Activated CD8-positive, alpha-beta T cell treated with anti-CD3 and anti-CD28 coated beads for 36 hours (primary cell): ENCODE measurements at regions of chr2 and their contacts with region 1.

Region 1: GRCh38 chr2:6826081-6826913 is 39.4 kb downstream of the CMPK2 start:
- DNase-seq: peak; percentile 82
- ATAC-seq: peak; percentile 96
- H3K4me3 Mint-ChIP-seq: no peak overlapping the region
- H3K27ac Mint-ChIP-seq: no peak overlapping the region
- H3K4me1 Mint-ChIP-seq: peaks cover 9% of the 10 kb centered on the region
- H3K27me3 Mint-ChIP-seq: no peaks in the 10 kb centered on the region
- CTCF ChIP-seq: peak; percentile 85

Region 2: DNA sequence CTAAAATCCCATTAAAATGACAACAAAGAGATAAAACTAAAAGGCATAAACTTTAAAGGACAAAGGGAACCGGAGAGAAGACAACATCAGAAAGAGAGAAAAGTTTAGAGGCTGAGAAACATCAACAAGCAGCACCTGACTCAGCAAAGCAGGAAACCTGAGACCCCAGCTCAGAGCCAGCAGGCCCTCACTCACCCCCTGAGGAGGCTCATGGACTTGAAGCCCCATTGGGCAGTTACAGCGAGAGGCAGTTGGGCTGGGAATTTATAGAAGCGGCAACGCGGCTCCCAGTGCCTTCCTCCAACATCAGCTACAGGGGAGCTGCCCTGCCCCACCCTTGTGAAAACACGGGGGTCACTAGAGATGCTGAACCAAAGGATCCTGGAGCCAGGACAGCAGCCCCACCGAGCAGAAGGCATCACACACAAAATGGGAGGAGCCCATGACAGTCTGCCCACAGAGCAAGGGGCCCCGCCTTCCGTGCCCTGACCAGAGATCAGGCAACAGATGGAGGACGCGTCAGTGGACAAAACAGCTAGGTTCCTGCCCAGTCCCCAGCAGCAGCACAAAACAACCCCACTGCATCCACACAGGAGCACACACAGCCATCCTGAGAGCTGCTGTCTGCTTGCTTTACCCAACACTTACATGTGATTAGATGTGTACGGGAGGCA is 13.3 kb before region 1 on chr2:
- CTCF ChIA-PET with region 1: no interaction called
- POLR2A ChIA-PET with region 1: no interaction called
- intact Hi-C with region 1: no loop called
- DNase-seq: no peak
- ATAC-seq: no peak
- H3K4me3 Mint-ChIP-seq: no peak overlapping the region
- H3K27ac Mint-ChIP-seq: no peak overlapping the region
- H3K4me1 Mint-ChIP-seq: no peaks in the 10 kb centered on the region
- H3K27me3 Mint-ChIP-seq: peaks cover 16% of the 10 kb centered on the region
- CTCF ChIP-seq: no peak

Region 3: DNA sequence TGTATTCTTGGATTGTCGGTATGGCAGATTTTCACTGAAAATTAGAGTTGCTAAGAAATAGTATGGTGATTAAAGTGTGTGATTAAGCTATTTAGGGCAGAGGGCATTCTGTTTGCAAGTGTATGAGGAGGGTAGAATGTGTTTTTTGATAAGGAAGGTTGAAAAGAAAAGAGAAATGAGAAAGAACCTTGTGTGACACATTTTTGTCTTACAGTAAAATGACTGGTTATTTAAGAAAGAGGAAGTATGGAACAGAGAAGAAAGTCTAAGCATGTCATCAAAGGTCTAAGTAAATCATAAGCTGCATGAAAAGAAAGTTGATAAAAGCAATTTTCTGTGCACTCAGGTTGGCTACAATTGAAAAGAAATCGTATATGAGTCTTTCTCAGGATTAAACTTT is 46.1 kb after region 1 on chr2:
- CTCF ChIA-PET with region 1: interaction called, 16 read pairs
- POLR2A ChIA-PET with region 1: no interaction called
- intact Hi-C with region 1: no loop called
- DNase-seq: no peak
- ATAC-seq: no peak
- H3K4me3 Mint-ChIP-seq: no peak overlapping the region
- H3K27ac Mint-ChIP-seq: peak overlapping the region; percentile 32
- H3K4me1 Mint-ChIP-seq: peaks cover 40% of the 10 kb centered on the region
- H3K27me3 Mint-ChIP-seq: no peaks in the 10 kb centered on the region
- CTCF ChIP-seq: no peak